Calu3 (cell line): ENCODE measurements at regions of chr3 and their contacts with region 1.

Region 1: DNA sequence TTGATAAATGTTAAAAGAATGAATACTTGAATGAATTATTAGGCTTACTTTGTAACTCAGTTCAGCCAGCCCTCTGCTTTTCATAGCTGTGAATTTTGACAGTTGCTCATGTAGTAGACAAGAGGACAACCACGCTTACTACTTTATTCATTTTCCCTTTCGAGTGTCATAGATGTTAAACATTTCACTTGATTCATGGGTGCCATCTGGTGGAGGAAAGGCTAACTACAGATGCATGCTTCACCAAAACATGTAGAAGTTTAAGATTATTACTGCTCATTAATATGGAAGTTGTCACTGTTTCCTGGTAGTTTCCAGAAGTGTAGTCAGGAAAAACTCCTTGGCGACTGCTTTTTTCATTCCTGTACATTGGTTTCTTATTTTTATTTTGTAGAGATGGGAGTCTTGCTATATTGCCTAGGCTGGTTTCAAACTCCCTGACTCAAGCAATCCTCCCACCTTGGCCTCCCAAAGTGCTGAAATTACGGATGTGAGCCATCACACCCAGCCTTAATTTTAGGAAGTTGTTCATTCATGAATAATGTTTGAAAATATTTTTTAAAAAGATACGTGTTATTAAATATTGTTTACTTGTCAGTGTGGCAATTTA is 163.2 kb downstream of the B3GALNT1 start:
- DNase-seq: peak; percentile 90
- H3K4me3 Mint-ChIP-seq: no peak overlapping the region
- H3K27ac Mint-ChIP-seq: no peak overlapping the region
- H3K4me1 Mint-ChIP-seq: peaks cover 17% of the 10 kb centered on the region
- H3K27me3 Mint-ChIP-seq: no peaks in the 10 kb centered on the region
- CTCF ChIP-seq: peak; percentile 79

Region 2: DNA sequence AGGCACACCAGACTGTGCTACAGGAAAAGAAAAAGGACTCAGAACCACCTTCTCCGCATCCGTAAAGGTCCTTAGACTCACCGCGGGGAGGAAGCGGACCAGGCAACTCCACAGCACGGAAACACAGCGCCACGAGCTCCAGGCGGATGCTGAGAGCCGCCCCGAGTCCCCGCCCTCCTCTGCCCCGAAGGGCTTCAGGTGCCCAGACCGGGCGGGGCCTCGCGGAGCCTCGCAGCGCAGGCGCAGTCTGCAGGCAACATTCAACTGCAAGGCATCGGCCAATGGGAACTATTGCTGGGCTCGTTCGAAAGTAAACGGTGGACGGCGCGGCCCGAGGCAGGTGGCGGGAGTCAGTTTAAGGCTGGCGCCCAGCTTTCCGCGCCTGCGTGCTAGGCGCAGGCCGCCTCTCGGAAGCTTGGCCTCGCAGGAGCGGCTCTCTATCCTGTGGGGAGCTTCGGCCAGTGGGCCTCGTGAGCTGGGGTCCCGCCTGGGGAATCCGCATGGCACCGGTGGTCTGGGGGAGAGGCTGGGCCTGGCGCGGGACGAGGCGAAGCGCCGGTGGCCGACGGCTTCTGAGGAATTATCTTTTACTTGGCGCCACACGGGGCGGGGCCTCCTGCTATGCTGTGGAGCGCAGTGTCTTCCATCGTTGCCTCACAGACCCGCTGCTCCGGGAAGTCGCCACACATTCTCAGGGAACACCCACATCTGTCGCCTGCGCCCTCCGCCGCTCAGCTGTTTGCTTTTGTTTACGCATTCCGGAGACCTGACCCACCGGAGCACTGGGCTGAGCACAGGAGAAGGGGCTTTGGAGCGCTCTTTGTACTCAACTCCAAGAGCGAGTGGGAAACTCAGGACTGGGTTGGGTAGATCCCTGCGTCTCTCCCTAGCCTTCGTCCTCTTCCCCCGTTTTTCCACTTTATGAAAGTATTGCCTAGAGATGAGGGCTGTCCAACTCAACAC is 492.1 kb before region 1 on chr3 and contains the start of gene TRIM59:
- CTCF ChIA-PET with region 1: no interaction called
- intact Hi-C with region 1: loop called (anchors 10 kb)
- DNase-seq: peak; percentile 97
- H3K4me3 Mint-ChIP-seq: peak within 1 kb of the TSS; percentile 100
- H3K27ac Mint-ChIP-seq: peak within 1 kb of the TSS; percentile 100
- H3K4me1 Mint-ChIP-seq: peaks cover 38% of the 10 kb centered on the region
- H3K27me3 Mint-ChIP-seq: no peaks in the 10 kb centered on the region
- CTCF ChIP-seq: no peak
- total RNA-seq, gene TRIM59: 20.8 and 22.3 TPM in 2 replicates

Region 3: DNA sequence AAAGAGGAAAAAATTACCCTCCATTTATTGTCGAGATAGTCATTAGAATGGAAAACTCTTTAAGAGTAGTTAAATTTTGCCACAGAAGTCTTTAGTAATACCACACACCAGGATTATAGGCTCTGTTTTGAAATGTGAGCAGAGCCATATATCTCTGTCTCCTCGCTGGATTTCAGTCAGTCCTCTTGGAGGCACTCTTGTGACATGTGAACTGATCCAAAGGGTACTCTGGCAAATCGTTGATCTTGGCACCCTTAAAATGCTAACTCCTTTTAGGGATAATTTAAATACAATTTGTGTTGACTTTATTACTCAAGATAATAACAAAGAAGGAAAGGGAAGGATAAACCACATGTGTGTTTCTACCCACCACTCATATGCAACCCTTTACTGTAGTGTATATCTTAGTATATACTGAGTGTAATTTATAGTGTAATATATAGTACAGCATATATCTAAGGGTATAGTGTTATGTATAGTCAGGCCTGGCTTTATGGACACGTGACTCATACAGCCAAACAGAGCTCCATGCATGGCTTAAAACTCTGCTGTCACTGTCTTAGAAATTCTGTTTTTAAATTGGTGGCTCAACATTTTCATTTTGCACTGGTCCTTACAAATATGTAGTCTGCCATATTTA is 364.3 kb before region 1 on chr3:
- CTCF ChIA-PET with region 1: interaction called, 3 read pairs
- intact Hi-C with region 1: loop called (anchors 1 kb)
- DNase-seq: peak; percentile 53
- H3K4me3 Mint-ChIP-seq: no peak overlapping the region
- H3K27ac Mint-ChIP-seq: no peak overlapping the region
- H3K4me1 Mint-ChIP-seq: peaks cover 10% of the 10 kb centered on the region
- H3K27me3 Mint-ChIP-seq: no peaks in the 10 kb centered on the region
- CTCF ChIP-seq: peak; percentile 38

Region 4: GRCh38 chr3:160686955-160687535 is 254.9 kb before region 1 on chr3:
- CTCF ChIA-PET with region 1: interaction called, 3 read pairs
- intact Hi-C with region 1: loop called (anchors 1 kb)
- DNase-seq: no peak
- H3K4me3 Mint-ChIP-seq: no peak overlapping the region
- H3K27ac Mint-ChIP-seq: no peak overlapping the region
- H3K4me1 Mint-ChIP-seq: peaks cover 29% of the 10 kb centered on the region
- H3K27me3 Mint-ChIP-seq: no peaks in the 10 kb centered on the region
- CTCF ChIP-seq: peak; percentile 76

Region 5: GRCh38 chr3:160893207-160893606 is 48.8 kb before region 1 on chr3:
- CTCF ChIA-PET with region 1: no interaction called
- intact Hi-C with region 1: no loop called
- DNase-seq: no peak
- H3K4me3 Mint-ChIP-seq: no peak overlapping the region
- H3K27ac Mint-ChIP-seq: no peak overlapping the region
- H3K4me1 Mint-ChIP-seq: no peaks in the 10 kb centered on the region
- H3K27me3 Mint-ChIP-seq: no peaks in the 10 kb centered on the region
- CTCF ChIP-seq: no peak

Region 6: DNA sequence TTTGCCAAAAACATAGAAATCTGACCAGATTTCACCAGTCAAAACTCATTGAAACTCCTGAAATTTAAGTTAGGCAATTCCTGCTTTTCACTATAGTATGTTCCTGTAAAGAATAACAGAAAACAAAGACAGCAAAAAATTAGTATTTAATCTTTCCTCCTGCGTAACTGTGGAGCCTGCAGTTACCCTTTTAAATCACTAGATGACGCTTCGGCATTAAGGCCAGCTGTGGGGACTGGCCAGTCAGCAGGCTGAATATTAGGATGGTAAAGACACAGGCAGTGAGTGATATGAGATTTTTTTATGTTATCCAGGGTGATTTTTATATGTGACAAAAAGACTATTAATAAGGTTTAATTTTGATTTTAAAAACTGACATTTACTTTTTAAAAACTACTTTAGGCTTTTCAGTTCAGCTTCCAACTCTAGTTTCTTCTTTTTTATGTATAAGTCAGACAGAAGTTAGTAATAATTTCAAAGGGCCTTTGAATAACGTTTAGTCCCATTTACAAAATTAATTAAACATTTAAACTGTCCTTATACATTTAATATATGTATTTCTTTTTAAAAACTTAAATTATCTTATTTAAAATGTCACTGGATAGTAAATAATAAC is 20.9 kb before region 1 on chr3:
- CTCF ChIA-PET with region 1: no interaction called
- intact Hi-C with region 1: loop called (anchors 1 kb)
- DNase-seq: peak; percentile 52
- H3K4me3 Mint-ChIP-seq: no peak overlapping the region
- H3K27ac Mint-ChIP-seq: no peak overlapping the region
- H3K4me1 Mint-ChIP-seq: no peaks in the 10 kb centered on the region
- H3K27me3 Mint-ChIP-seq: no peaks in the 10 kb centered on the region
- CTCF ChIP-seq: peak; percentile 94